H1 (cell line): ENCODE measurements at regions of chr9 and their contacts with region 1.

Region 1: GRCh38 chr9:120909904-120910303 is 16.7 kb downstream of the TRAF1 start:
- DNase-seq: no peak
- H3K4me3 ChIP-seq: no peak overlapping the region
- H3K27ac ChIP-seq: no peak overlapping the region
- H3K4me1 ChIP-seq: peaks cover 0 to 12% (median 8%) of the 10 kb centered on the region in 4 experiments; a peak in 5 of 7 replicates
- H3K27me3 ChIP-seq: no peaks in the 10 kb centered on the region
- CTCF ChIP-seq: no peak
- EP300 ChIP-seq: no peak
- POLR2A ChIP-seq: no peak
- RAD21 ChIP-seq: no peak

Region 2: GRCh38 chr9:120878188-120879130 is 31.4 kb before region 1 on chr9:
- CTCF ChIA-PET with region 1: interaction called, 10 read pairs
- POLR2A ChIA-PET with region 1: interaction called, 5 read pairs
- DNase-seq: no peak
- H3K4me3 ChIP-seq: no peak overlapping the region
- H3K27ac ChIP-seq: no peak overlapping the region
- H3K4me1 ChIP-seq: peaks cover 17 to 36% (median 27%) of the 10 kb centered on the region in 4 experiments
- H3K27me3 ChIP-seq: peaks cover 0 to 4% (median 1%) of the 10 kb centered on the region in 4 experiments; a peak in 3 of 7 replicates
- CTCF ChIP-seq: no peak
- EP300 ChIP-seq: no peak
- POLR2A ChIP-seq: no peak
- RAD21 ChIP-seq: no peak

Region 3: GRCh38 chr9:120894321-120895148 is 15.4 kb before region 1 on chr9:
- CTCF ChIA-PET with region 1: interaction called, 71 read pairs
- POLR2A ChIA-PET with region 1: interaction called, 4 read pairs
- DNase-seq: peak in 1 of 2 experiments; percentile 65
- H3K4me3 ChIP-seq: peak overlapping the region; percentile 23 to 54 (median 34); a peak in 7 of 8 replicates
- H3K27ac ChIP-seq: no peak overlapping the region
- H3K4me1 ChIP-seq: peaks cover 0 to 6% (median 5%) of the 10 kb centered on the region in 4 experiments; a peak in 6 of 7 replicates
- H3K27me3 ChIP-seq: peaks cover 0 to 21% (median 15%) of the 10 kb centered on the region in 4 experiments; a peak in 5 of 7 replicates
- CTCF ChIP-seq: no peak
- EP300 ChIP-seq: no peak
- POLR2A ChIP-seq: no peak
- RAD21 ChIP-seq: no peak; a peak in 1 of 4 replicates

Region 4: GRCh38 chr9:121023064-121023463 is 113.2 kb after region 1 on chr9:
- CTCF ChIA-PET with region 1: no interaction called
- POLR2A ChIA-PET with region 1: no interaction called
- DNase-seq: no peak
- H3K4me3 ChIP-seq: no peak overlapping the region
- H3K27ac ChIP-seq: no peak overlapping the region
- H3K4me1 ChIP-seq: no peaks in the 10 kb centered on the region
- H3K27me3 ChIP-seq: no peaks in the 10 kb centered on the region
- CTCF ChIP-seq: peak; percentile 17 to 30 (median 20); a peak in 2 of 4 replicates
- EP300 ChIP-seq: no peak
- POLR2A ChIP-seq: no peak
- RAD21 ChIP-seq: peak; percentile 26 to 38; a peak in 3 of 4 replicates